Left cardiac atrium (tissue), 4 donors: ENCODE measurements at regions of chr3 and their contacts with region 1.

Region 1: DNA sequence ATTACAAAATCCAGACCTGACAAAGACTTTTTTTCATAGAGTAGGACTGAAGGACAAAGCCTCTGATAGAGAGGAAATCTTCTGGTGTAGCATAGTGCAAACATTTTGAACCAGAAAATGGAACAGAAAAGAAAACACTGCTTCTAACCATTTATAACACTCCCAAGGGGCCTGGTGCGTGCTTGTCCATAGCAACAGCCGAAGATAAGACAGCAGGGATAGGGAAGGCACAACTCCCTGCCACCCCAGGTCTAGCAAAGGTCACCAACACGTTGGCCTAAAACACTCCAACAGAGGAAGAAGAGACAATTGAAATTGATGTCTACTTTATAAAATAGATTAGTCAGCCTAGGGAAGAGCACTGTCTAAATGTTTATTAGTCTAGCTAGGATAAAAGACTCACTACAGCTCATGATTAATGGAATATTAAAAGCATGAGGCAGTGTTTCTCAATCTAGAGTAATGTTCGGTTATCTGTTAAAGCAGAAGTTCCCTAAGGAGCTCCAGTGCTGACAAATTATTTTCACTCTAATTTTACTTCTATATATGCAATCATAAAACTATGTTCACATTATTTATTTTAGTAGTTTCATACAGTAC is 145.2 kb downstream of the P3H2 start:
- DNase-seq: no peak
- ATAC-seq: peak; percentile 61 to 83

Region 2: GRCh38 chr3:190119461-190120268 is 144.2 kb after region 1 on chr3:
- intact Hi-C with region 1: loop called in 1 of 2 experiments (anchors 10 kb)
- DNase-seq: peak; percentile 21
- ATAC-seq: no peak